Calu3 (cell line): ENCODE measurements at regions of chr14 and their contacts with region 1.

Region 1: GRCh38 chr14:100108042-100108825 is 43.0 kb downstream of the EVL start:
- DNase-seq: peak; percentile 86
- H3K4me3 Mint-ChIP-seq: no peak overlapping the region
- H3K27ac Mint-ChIP-seq: no peak overlapping the region
- H3K4me1 Mint-ChIP-seq: peaks cover 16% of the 10 kb centered on the region
- H3K27me3 Mint-ChIP-seq: no peaks in the 10 kb centered on the region
- CTCF ChIP-seq: peak; percentile 78

Region 2: DNA sequence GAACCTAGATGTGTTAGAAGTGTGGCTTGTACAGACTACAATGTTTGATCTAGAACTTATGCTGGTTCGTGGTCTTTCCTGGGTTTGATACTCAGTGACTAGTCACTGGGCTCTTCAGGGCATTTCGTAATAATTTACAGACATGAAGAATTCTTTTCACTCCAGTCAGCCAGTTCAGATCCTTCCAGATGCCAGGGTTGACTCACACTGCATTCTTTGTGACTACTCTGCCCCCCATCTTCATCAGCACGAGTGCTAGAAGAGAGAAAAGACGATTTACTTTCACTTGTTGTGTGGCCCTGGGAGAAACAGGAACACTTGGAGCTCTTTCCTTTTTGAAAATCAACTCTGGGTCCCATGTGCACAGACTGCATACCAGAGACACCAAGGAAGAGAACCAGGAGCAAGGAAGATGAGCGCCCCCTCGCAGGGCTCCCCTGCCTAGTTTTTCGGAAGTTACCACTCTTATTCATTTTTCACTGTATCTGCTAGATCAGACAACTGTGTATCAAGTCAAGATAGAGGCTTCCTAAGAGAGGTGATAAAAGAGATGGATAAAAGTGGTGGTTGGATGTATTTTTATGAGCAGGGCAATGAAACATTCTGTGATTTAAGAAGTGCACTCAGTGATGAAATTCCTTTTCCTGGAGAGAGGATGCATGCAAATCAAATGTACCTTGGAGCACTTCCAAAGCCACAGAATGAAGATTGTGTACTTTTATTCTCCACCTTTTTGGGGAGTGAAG is 76.5 kb before region 1 on chr14:
- CTCF ChIA-PET with region 1: no interaction called
- intact Hi-C with region 1: loop called (anchors 2 kb)
- DNase-seq: peak; percentile 59
- H3K4me3 Mint-ChIP-seq: peak overlapping the region; percentile 71
- H3K27ac Mint-ChIP-seq: peak overlapping the region; percentile 62
- H3K4me1 Mint-ChIP-seq: peaks cover 40% of the 10 kb centered on the region
- H3K27me3 Mint-ChIP-seq: no peaks in the 10 kb centered on the region
- CTCF ChIP-seq: no peak

Region 3: GRCh38 chr14:100294213-100294962 is 186.2 kb after region 1 on chr14:
- CTCF ChIA-PET with region 1: no interaction called
- intact Hi-C with region 1: no loop called
- DNase-seq: no peak
- H3K4me3 Mint-ChIP-seq: no peak overlapping the region
- H3K27ac Mint-ChIP-seq: no peak overlapping the region
- H3K4me1 Mint-ChIP-seq: no peaks in the 10 kb centered on the region
- H3K27me3 Mint-ChIP-seq: no peaks in the 10 kb centered on the region
- CTCF ChIP-seq: no peak

Region 4: DNA sequence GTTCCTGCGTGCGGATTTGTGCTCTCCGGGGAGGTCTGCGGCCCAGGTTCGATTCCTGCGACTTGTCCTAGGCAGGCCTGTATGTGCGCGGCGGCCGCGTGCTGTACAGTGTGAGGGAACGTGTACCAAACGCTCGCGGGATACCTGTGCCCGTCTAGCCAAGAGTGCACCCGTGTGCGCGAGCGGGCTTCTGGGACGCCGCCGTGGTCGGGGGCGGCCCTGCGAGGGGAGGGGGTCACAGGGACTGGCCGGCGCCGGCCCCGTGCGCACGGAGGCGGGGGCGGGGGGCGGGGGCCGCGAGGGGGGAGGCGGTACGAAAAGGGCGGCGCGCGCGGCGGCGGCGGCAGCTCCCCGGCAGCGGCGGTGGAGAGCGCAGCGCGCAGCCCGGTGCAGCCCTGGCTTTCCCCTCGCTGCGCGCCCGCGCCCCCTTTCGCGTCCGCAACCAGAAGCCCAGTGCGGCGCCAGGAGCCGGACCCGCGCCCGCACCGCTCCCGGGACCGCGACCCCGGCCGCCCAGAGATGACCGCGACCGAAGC is 618.4 kb after region 1 on chr14 and contains the start of gene DLK1:
- CTCF ChIA-PET with region 1: no interaction called
- intact Hi-C with region 1: no loop called
- DNase-seq: no peak
- H3K4me3 Mint-ChIP-seq: no peak within 1 kb of the TSS
- H3K27ac Mint-ChIP-seq: no peak within 1 kb of the TSS
- H3K4me1 Mint-ChIP-seq: peaks cover 11% of the 10 kb centered on the region
- H3K27me3 Mint-ChIP-seq: peaks cover 79% of the 10 kb centered on the region
- CTCF ChIP-seq: no peak
- total RNA-seq, gene DLK1: not detected in 2 replicates